Activated CD8-positive, alpha-beta memory T cell treated with anti-CD3 and anti-CD28 coated beads, Interleukin-2, amount 10 ng/mL, durations not matched to agents 7 days and 5 days (primary cell): ENCODE measurements at regions of chr13 and their contacts with region 1.

Region 1: GRCh38 chr13:31161828-31162590 is at the start of gene HSPH1:
- DNase-seq: peak; percentile 99
- ATAC-seq: peak; percentile 85
- H3K4me3 Mint-ChIP-seq: peak within 1 kb of the TSS; percentile 90
- H3K27ac Mint-ChIP-seq: peak within 1 kb of the TSS; percentile 99
- H3K4me1 Mint-ChIP-seq: peaks cover 39% of the 10 kb centered on the region
- H3K27me3 Mint-ChIP-seq: no peaks in the 10 kb centered on the region
- total RNA-seq, gene HSPH1: 141 to 202 TPM

Region 2: DNA sequence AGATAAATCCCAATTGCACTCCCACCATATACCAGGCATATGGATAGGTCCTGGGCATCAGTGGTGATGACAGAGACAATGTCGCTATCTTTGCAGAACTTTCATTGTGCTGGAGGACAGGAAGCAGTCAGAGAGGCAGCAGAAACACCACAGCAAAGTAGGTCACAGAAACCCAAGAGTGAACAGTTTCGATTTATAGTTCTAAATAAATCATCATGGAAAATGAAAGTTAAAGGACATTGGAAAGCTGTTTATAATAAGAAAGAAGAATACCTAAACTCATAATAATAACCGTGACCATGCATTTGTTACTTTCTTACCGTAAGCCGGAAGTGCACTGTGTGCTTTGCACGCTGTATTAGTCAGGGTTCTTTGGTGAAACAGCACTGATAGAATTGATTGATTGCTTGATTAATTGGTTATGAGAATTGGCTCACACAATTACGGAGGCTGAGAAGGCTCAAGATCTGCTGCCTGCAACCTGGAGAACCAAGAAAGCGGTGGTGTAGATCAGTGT is 387.7 kb before region 1 on chr13:
- CTCF ChIA-PET with region 1: no interaction called
- DNase-seq: peak; percentile 71
- ATAC-seq: peak; percentile 95
- H3K4me3 Mint-ChIP-seq: peak overlapping the region; percentile 42
- H3K27ac Mint-ChIP-seq: peak overlapping the region; percentile 89
- H3K4me1 Mint-ChIP-seq: peaks cover 43% of the 10 kb centered on the region
- H3K27me3 Mint-ChIP-seq: no peaks in the 10 kb centered on the region

Region 3: GRCh38 chr13:30963791-30964190 is 198.2 kb before region 1 on chr13:
- CTCF ChIA-PET with region 1: no interaction called
- DNase-seq: no peak
- ATAC-seq: no peak
- H3K4me3 Mint-ChIP-seq: no peak overlapping the region
- H3K27ac Mint-ChIP-seq: no peak overlapping the region
- H3K4me1 Mint-ChIP-seq: no peaks in the 10 kb centered on the region
- H3K27me3 Mint-ChIP-seq: peaks cover 58% of the 10 kb centered on the region

Region 4: GRCh38 chr13:30995331-30995730 is 166.7 kb before region 1 on chr13:
- CTCF ChIA-PET with region 1: no interaction called
- DNase-seq: no peak
- ATAC-seq: no peak
- H3K4me3 Mint-ChIP-seq: no peak overlapping the region
- H3K27ac Mint-ChIP-seq: no peak overlapping the region
- H3K4me1 Mint-ChIP-seq: no peaks in the 10 kb centered on the region
- H3K27me3 Mint-ChIP-seq: peaks cover 33% of the 10 kb centered on the region

Region 5: DNA sequence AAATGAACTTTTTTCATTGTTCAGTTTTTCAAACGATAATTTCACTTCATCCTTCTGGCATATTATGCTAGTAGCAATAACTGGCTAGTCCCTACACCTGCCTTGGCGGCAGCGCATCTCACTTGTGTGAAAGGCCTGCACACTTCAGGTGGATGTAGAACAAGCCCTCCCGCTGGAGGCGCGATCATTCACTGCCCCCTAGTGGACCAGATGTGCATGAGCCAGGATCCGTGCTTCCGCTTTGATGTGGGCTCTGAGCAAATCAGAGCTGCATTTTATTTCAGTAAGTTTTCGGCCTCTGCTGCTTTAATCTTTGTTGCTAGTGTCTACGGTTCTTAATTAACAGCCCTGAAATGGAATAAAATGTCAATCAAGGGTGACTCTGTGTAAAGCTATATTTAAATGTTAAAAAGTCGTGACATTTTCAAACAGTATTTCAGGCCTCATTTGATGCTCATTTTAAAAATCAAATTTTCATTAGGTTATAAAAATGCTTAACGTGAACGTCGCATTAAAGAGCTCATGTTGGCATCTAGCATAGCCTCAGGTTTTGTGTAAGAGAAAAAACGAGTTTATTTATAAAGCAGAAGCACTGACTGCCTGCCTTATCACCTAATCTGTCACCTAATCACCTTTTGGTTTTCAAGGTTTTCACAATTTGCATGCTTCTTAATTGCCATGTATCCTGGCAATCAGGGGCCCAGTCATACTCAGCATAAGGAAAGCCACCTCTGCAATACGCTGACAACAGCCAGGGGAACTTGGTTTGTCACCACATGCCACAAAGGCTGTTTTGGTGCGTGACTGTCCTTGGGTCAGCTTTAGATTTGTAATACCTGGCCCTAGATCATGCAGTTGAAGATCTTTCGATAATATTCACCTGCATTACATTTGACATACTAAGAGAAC is 117.4 kb before region 1 on chr13:
- CTCF ChIA-PET with region 1: interaction called, 16 read pairs
- DNase-seq: peak; percentile 90
- ATAC-seq: peak; percentile 78
- H3K4me3 Mint-ChIP-seq: no peak overlapping the region
- H3K27ac Mint-ChIP-seq: peak overlapping the region; percentile 84
- H3K4me1 Mint-ChIP-seq: peaks cover 51% of the 10 kb centered on the region
- H3K27me3 Mint-ChIP-seq: peaks cover 18% of the 10 kb centered on the region

Region 6: DNA sequence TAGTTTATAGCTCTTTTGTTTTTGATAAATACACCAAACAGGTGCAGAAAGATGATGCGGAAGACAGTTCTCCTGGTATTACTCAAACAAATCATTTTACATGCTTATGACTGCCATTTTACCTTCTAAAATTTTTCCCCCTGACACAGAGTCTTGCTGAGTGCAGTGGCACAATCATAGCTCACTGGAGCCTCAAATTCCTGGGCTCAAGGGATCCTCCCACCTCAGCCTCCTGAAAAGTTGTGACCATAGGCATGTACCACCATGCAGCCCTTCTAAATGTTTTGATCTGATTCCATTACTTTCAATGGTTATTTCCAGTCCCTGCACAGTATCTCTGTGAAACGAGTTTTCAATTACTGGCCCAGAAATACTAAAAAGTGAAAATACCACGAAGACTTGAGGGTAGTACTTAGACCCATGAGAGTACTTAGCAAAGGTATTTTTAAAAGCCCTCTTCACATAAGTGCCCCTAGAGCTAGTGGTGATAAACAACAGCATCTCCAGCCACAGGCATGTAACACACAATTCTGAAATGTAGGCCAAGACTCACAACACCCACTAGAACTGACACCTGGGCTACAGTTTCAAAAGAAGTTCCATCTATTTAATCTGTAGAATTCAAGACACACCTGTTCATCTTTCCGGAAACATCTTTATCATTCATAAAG is 11.6 kb before region 1 on chr13:
- CTCF ChIA-PET with region 1: interaction called, 13 read pairs
- DNase-seq: no peak
- ATAC-seq: no peak
- H3K4me3 Mint-ChIP-seq: no peak overlapping the region
- H3K27ac Mint-ChIP-seq: no peak overlapping the region
- H3K4me1 Mint-ChIP-seq: peaks cover 35% of the 10 kb centered on the region
- H3K27me3 Mint-ChIP-seq: no peaks in the 10 kb centered on the region

Region 7: GRCh38 chr13:31199849-31200636 is 38.0 kb after region 1 on chr13 and contains the start of gene B3GLCT:
- CTCF ChIA-PET with region 1: interaction called, 11 read pairs
- DNase-seq: peak; percentile 82
- ATAC-seq: peak; percentile 81
- H3K4me3 Mint-ChIP-seq: peak within 1 kb of the TSS; percentile 77
- H3K27ac Mint-ChIP-seq: peak within 1 kb of the TSS; percentile 78
- H3K4me1 Mint-ChIP-seq: peaks cover 27% of the 10 kb centered on the region
- H3K27me3 Mint-ChIP-seq: peaks cover 6% of the 10 kb centered on the region
- total RNA-seq, gene B3GLCT: 4.2 to 4.9 TPM

Region 8: DNA sequence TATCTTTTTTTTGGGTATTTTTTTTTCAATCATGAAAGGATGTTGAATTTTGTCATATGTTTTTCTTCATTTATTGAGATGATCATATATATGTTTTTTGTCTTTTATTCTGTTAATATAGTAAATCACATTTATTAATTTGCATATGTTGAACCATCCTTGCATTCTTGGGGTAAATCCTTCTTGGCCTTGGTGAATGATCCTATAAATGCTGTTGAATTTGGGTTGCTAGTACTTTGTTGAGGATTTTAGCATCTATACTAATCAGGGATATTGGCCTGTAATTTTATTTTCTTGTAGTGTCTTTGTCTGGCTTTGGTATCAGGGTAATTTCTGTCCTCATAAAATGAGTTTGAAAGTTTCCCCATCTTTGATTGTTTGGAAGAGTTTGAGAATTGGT is 237.7 kb after region 1 on chr13:
- CTCF ChIA-PET with region 1: no interaction called
- DNase-seq: no peak
- ATAC-seq: no peak
- H3K4me3 Mint-ChIP-seq: no peak overlapping the region
- H3K27ac Mint-ChIP-seq: no peak overlapping the region
- H3K4me1 Mint-ChIP-seq: peaks cover 3% of the 10 kb centered on the region
- H3K27me3 Mint-ChIP-seq: no peaks in the 10 kb centered on the region